ENCODE measurements at regions of chr2 and their contacts with region 1.

Region 1: GRCh38 chr2:232327105-232328041 is 51.2 kb upstream of the ALPP start:
- DNase-seq: peak; percentile 89
- ATAC-seq: peak; percentile 83
- H3K4me3 Mint-ChIP-seq: no peak overlapping the region
- H3K27ac Mint-ChIP-seq: no peak overlapping the region
- H3K4me1 Mint-ChIP-seq: peaks cover 35% of the 10 kb centered on the region
- H3K27me3 Mint-ChIP-seq: no peaks in the 10 kb centered on the region

Region 2: GRCh38 chr2:231910771-231911170 is 416.6 kb before region 1 on chr2:
- CTCF ChIA-PET with region 1: interaction called, 30 read pairs
- POLR2A ChIA-PET with region 1: interaction called, 3 read pairs
- DNase-seq: no peak
- ATAC-seq: no peak
- H3K4me3 Mint-ChIP-seq: no peak overlapping the region
- H3K27ac Mint-ChIP-seq: peak overlapping the region; percentile 63
- H3K4me1 Mint-ChIP-seq: peaks cover 33% of the 10 kb centered on the region
- H3K27me3 Mint-ChIP-seq: peaks cover 3% of the 10 kb centered on the region

Region 3: GRCh38 chr2:232013701-232014353 is 313.5 kb before region 1 on chr2:
- CTCF ChIA-PET with region 1: no interaction called
- POLR2A ChIA-PET with region 1: no interaction called
- DNase-seq: no peak
- ATAC-seq: no peak
- H3K4me3 Mint-ChIP-seq: no peak overlapping the region
- H3K27ac Mint-ChIP-seq: no peak overlapping the region
- H3K4me1 Mint-ChIP-seq: peaks cover 11% of the 10 kb centered on the region
- H3K27me3 Mint-ChIP-seq: no peaks in the 10 kb centered on the region

Region 4: DNA sequence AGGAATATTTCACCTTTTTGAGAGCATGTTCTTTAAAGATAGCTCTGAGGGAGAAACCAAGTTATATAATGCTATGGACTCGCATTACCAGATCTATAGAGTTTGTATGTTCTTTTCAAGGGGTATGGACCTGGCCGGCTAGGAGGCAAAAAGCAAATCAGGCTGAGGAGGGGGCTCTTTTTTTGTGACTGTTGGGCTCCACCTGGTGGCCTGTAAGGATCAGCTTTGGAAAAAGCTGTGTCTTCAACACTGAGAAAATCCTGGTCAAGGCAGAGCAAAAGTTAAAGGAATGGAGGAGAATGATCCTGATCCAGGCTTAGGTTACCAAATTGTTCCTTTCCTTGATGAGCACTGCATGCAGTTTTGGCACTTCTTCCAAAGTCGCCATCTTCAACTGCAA is 185.3 kb before region 1 on chr2:
- CTCF ChIA-PET with region 1: interaction called, 20 read pairs
- POLR2A ChIA-PET with region 1: no interaction called
- DNase-seq: peak; percentile 46
- ATAC-seq: no peak
- H3K4me3 Mint-ChIP-seq: no peak overlapping the region
- H3K27ac Mint-ChIP-seq: no peak overlapping the region
- H3K4me1 Mint-ChIP-seq: peaks cover 27% of the 10 kb centered on the region
- H3K27me3 Mint-ChIP-seq: no peaks in the 10 kb centered on the region

Region 5: DNA sequence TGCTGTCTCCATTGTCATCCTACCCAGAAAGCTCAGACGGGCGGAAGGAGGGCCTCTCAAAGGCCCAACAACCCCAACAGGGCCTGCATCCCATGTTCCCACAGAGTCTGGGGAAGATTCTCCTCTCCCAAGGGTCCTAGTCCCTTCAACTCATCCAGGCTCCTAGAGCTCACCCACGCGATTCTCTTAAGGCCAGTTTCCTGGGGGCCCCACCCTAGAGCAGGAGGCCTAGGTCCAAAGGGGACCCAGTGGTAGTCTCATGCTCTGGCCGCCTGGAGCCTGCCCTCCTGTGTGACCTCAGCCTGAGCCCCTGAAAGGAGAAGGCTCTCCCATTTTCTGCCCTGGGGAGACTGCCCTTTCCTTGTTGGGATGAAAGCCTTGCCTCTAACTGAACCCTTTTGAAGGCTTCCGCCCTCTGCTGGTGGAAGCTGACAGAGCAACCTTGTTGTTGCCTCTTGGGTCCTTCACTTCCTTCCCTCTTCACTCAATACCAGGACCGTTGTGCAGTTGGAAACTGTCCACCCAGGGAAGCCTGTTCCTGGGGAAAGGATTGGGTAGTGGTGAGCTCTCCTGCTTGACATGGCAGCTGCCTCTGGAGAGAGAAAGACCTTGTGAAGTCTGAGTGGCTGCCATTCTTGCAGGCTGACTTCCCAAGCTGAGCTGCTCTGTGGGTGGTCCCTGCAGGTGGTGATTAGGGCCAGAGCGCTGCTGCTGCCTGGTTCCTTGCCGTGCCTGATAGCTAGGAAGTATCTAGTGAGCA is 34.8 kb before region 1 on chr2:
- CTCF ChIA-PET with region 1: interaction called, 91 read pairs
- POLR2A ChIA-PET with region 1: no interaction called
- DNase-seq: peak; percentile 77
- ATAC-seq: peak; percentile 82
- H3K4me3 Mint-ChIP-seq: no peak overlapping the region
- H3K27ac Mint-ChIP-seq: peak overlapping the region; percentile 69
- H3K4me1 Mint-ChIP-seq: peaks cover 11% of the 10 kb centered on the region
- H3K27me3 Mint-ChIP-seq: no peaks in the 10 kb centered on the region

Region 6: GRCh38 chr2:232315049-232315922 is 12.1 kb before region 1 on chr2:
- CTCF ChIA-PET with region 1: interaction called, 98 read pairs
- POLR2A ChIA-PET with region 1: interaction called, 48 read pairs
- DNase-seq: peak; percentile 92
- ATAC-seq: peak; percentile 88
- H3K4me3 Mint-ChIP-seq: peak overlapping the region; percentile 42
- H3K27ac Mint-ChIP-seq: peak overlapping the region; percentile 96
- H3K4me1 Mint-ChIP-seq: peaks cover 92% of the 10 kb centered on the region
- H3K27me3 Mint-ChIP-seq: no peaks in the 10 kb centered on the region

Measured in activated CD8-positive, alpha-beta T cell treated with anti-CD3 and anti-CD28 coated beads, Interleukin-2, amount 10 ng/mL, durations not matched to agents 7 days and 5 days (primary cell).